Colonic mucosa (tissue), 4 donors: ENCODE measurements at regions of chr12 and their contacts with region 1.

Region 1: GRCh38 chr12:64549108-64549507 is 61.2 kb upstream of the RASSF3 start:
- DNase-seq: no peak
- H3K4me3 ChIP-seq: no peak overlapping the region
- H3K27ac ChIP-seq: no peak overlapping the region
- H3K4me1 ChIP-seq: no peaks in the 10 kb centered on the region
- H3K27me3 ChIP-seq: no peaks in the 10 kb centered on the region
- CTCF ChIP-seq: no peak

Region 2: GRCh38 chr12:64694130-64695040 is 145.3 kb after region 1 on chr12:
- intact Hi-C with region 1: loop called (anchors 2 kb)
- DNase-seq: no peak
- H3K4me3 ChIP-seq: no peak overlapping the region
- H3K27ac ChIP-seq: no peak overlapping the region
- H3K4me1 ChIP-seq: no peaks in the 10 kb centered on the region
- H3K27me3 ChIP-seq: no peaks in the 10 kb centered on the region
- CTCF ChIP-seq: no peak